ENCODE measurements at regions of chr14 and their contacts with region 1.

Region 1: GRCh38 chr14:59897761-59898383 is 22.1 kb upstream of the LRRC9 start:
- DNase-seq: peak; percentile 29
- H3K4me3 ChIP-seq: no peak overlapping the region
- H3K27ac ChIP-seq: no peak overlapping the region
- H3K4me1 ChIP-seq: no peaks in the 10 kb centered on the region
- H3K27me3 ChIP-seq: peaks cover 0 to 3% of the 10 kb centered on the region in 2 experiments
- CTCF ChIP-seq: peak; percentile 37 to 39
- POLR2A ChIP-seq: no peak

Region 2: GRCh38 chr14:59507063-59507780 is 390.6 kb before region 1 on chr14:
- CTCF ChIA-PET with region 1: interaction called, 45 read pairs
- POLR2A ChIA-PET with region 1: no interaction called
- dilution Hi-C with region 1: no loop called
- intact Hi-C with region 1: loop called (anchors 5 kb)
- DNase-seq: peak; percentile 47
- H3K4me3 ChIP-seq: no peak overlapping the region
- H3K27ac ChIP-seq: no peak overlapping the region
- H3K4me1 ChIP-seq: no peaks in the 10 kb centered on the region
- H3K27me3 ChIP-seq: peaks cover 0 to 7% of the 10 kb centered on the region in 2 experiments
- CTCF ChIP-seq: peak; percentile 75 to 83
- POLR2A ChIP-seq: no peak

Region 3: DNA sequence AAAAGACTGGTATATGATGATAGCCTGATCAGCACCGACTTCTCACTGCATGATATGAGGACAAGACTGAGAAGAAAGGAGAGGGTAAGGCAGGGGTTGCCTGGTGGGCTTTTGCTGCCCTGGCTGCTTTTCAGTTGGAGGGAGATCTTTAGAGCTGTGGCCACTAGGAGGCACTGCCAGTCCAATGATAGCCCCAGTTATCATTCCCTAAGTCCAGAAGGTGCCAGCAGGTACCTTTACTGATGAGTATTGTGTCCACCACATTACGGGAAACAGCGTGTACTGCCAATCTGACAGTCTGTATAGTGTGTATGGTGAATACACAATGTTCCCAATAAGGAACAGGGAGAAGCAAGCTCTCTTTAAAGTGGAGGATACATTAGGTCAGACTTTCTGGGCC is 265.5 kb before region 1 on chr14:
- CTCF ChIA-PET with region 1: interaction called, 154 read pairs
- POLR2A ChIA-PET with region 1: no interaction called
- dilution Hi-C with region 1: no loop called
- intact Hi-C with region 1: loop called (anchors 1 kb)
- DNase-seq: peak; percentile 24
- H3K4me3 ChIP-seq: no peak overlapping the region
- H3K27ac ChIP-seq: no peak overlapping the region
- H3K4me1 ChIP-seq: no peaks in the 10 kb centered on the region
- H3K27me3 ChIP-seq: peaks cover 16 to 47% of the 10 kb centered on the region in 2 experiments
- CTCF ChIP-seq: peak; percentile 49 to 52
- POLR2A ChIP-seq: no peak

Region 4: GRCh38 chr14:59657769-59658168 is 240.1 kb before region 1 on chr14:
- CTCF ChIA-PET with region 1: interaction called, 15 read pairs
- POLR2A ChIA-PET with region 1: no interaction called
- dilution Hi-C with region 1: no loop called
- intact Hi-C with region 1: no loop called
- DNase-seq: no peak
- H3K4me3 ChIP-seq: no peak overlapping the region
- H3K27ac ChIP-seq: no peak overlapping the region
- H3K4me1 ChIP-seq: no peaks in the 10 kb centered on the region
- H3K27me3 ChIP-seq: no peaks in the 10 kb centered on the region
- CTCF ChIP-seq: no peak
- POLR2A ChIP-seq: no peak

Region 5: GRCh38 chr14:59707778-59708561 is 189.9 kb before region 1 on chr14:
- CTCF ChIA-PET with region 1: interaction called, 141 read pairs
- POLR2A ChIA-PET with region 1: no interaction called
- dilution Hi-C with region 1: no loop called
- intact Hi-C with region 1: no loop called
- DNase-seq: no peak
- H3K4me3 ChIP-seq: no peak overlapping the region
- H3K27ac ChIP-seq: no peak overlapping the region
- H3K4me1 ChIP-seq: no peaks in the 10 kb centered on the region
- H3K27me3 ChIP-seq: peaks cover 2 to 22% of the 10 kb centered on the region in 2 experiments
- CTCF ChIP-seq: no peak
- POLR2A ChIP-seq: no peak

Region 6: GRCh38 chr14:59918824-59919569 is 21.1 kb after region 1 on chr14:
- CTCF ChIA-PET with region 1: interaction called, 28 read pairs
- POLR2A ChIA-PET with region 1: no interaction called
- dilution Hi-C with region 1: no loop called
- intact Hi-C with region 1: no loop called
- DNase-seq: peak; percentile 38
- H3K4me3 ChIP-seq: no peak overlapping the region
- H3K27ac ChIP-seq: no peak overlapping the region
- H3K4me1 ChIP-seq: no peaks in the 10 kb centered on the region
- H3K27me3 ChIP-seq: peaks cover 19 to 41% of the 10 kb centered on the region in 2 experiments
- CTCF ChIP-seq: peak; percentile 4 to 21
- POLR2A ChIP-seq: no peak